Dorsolateral prefrontal cortex (tissue), 120 donors: ENCODE measurements at regions of chr3 and their contacts with region 1.

Region 1: GRCh38 chr3:15205934-15206661 is at the start of gene CAPN7:
- DNase-seq: peak; percentile 87 to 97 (median 93)
- H3K4me3 ChIP-seq: peak within 1 kb of the TSS; percentile 71 to 100 (median 95)
- H3K27ac ChIP-seq: peak within 1 kb of the TSS; percentile 61 to 97 (median 91)
- H3K27me3 ChIP-seq: no peaks in the 10 kb centered on the region
- CTCF ChIP-seq: peak in 47 of 56 donors; percentile 10 to 61 (median 42)
- total RNA-seq, gene CAPN7: 33.3 to 71.8 (median 46.0) TPM

Region 2: GRCh38 chr3:14439579-14440518 is 766.2 kb before region 1 on chr3:
- intact Hi-C with region 1: no loop called
- DNase-seq: peak in 1 of 10 donors; percentile 52
- H3K4me3 ChIP-seq: peak overlapping the region in 5 of 59 donors; percentile 1 to 20 (median 17)
- H3K27ac ChIP-seq: peak overlapping the region in 27 of 59 donors; percentile 0 to 66 (median 38)
- H3K27me3 ChIP-seq: no peaks in the 10 kb centered on the region
- CTCF ChIP-seq: no peak

Region 3: GRCh38 chr3:14921078-14921616 is 285.0 kb before region 1 on chr3:
- intact Hi-C with region 1: loop called in 1 of 2 experiments (anchors 10 kb)
- DNase-seq: peak; percentile 79 to 94 (median 86)
- H3K4me3 ChIP-seq: no peak overlapping the region
- H3K27ac ChIP-seq: no peak overlapping the region
- H3K27me3 ChIP-seq: peaks cover 0 to 1% (median 0%) of the 10 kb centered on the region in 45 donors
- CTCF ChIP-seq: peak; percentile 87 to 100 (median 98)

Region 4: GRCh38 chr3:15108082-15108545 is 98.0 kb before region 1 on chr3:
- intact Hi-C with region 1: loop called in 1 of 2 experiments (anchors 5 kb)
- DNase-seq: peak; percentile 60 to 88 (median 74)
- H3K4me3 ChIP-seq: peak overlapping the region in 10 of 59 donors; percentile 9 to 38 (median 23)
- H3K27ac ChIP-seq: no peak overlapping the region
- H3K27me3 ChIP-seq: no peaks in the 10 kb centered on the region
- CTCF ChIP-seq: peak; percentile 66 to 94 (median 88)

Region 5: DNA sequence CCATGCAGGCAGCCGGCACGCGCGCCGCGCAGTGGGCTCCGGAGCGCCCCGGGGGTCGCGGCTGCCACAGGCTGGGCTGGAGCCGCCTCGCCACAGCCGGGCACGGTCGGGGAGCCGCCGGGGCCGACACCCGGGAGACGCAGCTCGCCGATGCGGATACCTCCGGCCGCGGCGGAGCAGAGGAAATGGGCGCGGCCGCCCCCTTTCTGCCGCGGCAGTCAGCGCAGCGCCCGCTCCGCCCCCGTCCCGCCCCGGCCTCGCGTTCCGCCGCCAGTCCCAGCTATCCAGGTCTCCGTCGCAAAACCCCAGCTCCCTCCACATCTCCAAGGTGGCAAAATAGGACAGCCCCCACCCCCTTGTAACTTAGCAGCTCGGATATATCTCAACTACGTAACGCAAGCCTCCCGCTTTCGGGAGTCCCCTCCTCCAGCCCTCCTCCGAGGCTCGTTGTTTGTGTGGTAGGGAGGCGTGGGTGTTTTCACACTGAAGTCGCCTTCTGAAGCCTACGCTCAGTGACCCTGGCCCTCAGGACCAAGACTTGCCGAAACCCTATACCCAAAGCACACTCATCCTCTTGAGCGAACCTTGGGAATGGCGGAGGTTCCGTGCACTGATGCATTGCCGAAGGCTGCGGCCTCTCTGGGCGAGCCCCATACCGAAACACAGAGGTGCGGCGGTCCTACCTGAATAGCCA is 126.5 kb after region 1 on chr3 and contains the start of gene SH3BP5:
- intact Hi-C with region 1: loop called in 1 of 2 experiments (anchors 2 kb)
- DNase-seq: peak; percentile 47 to 87 (median 70)
- H3K4me3 ChIP-seq: peak within 1 kb of the TSS; percentile 63 to 97 (median 89)
- H3K27ac ChIP-seq: peak within 1 kb of the TSS; percentile 38 to 97 (median 86)
- H3K27me3 ChIP-seq: no peaks in the 10 kb centered on the region
- CTCF ChIP-seq: peak; percentile 48 to 91 (median 76)
- total RNA-seq, gene SH3BP5: 30.2 to 111 (median 66.8) TPM

Region 6: GRCh38 chr3:15405448-15406050 is 199.5 kb after region 1 on chr3:
- intact Hi-C with region 1: loop called (anchors 1 to 5 kb)
- DNase-seq: peak in 1 of 10 donors; percentile 20
- H3K4me3 ChIP-seq: no peak overlapping the region
- H3K27ac ChIP-seq: no peak overlapping the region
- H3K27me3 ChIP-seq: no peaks in the 10 kb centered on the region
- CTCF ChIP-seq: peak; percentile 44 to 85 (median 68)

Region 7: GRCh38 chr3:15815696-15816095 is 609.6 kb after region 1 on chr3:
- intact Hi-C with region 1: loop called in 1 of 2 experiments (anchors 5 kb)
- DNase-seq: no peak
- H3K4me3 ChIP-seq: no peak overlapping the region
- H3K27ac ChIP-seq: peak overlapping the region in 11 of 59 donors; percentile 1 to 55 (median 26)
- H3K27me3 ChIP-seq: no peaks in the 10 kb centered on the region
- CTCF ChIP-seq: peak; percentile 18 to 83 (median 62)